ENCODE measurements at regions of chr1 and their contacts with region 1.

Region 1: DNA sequence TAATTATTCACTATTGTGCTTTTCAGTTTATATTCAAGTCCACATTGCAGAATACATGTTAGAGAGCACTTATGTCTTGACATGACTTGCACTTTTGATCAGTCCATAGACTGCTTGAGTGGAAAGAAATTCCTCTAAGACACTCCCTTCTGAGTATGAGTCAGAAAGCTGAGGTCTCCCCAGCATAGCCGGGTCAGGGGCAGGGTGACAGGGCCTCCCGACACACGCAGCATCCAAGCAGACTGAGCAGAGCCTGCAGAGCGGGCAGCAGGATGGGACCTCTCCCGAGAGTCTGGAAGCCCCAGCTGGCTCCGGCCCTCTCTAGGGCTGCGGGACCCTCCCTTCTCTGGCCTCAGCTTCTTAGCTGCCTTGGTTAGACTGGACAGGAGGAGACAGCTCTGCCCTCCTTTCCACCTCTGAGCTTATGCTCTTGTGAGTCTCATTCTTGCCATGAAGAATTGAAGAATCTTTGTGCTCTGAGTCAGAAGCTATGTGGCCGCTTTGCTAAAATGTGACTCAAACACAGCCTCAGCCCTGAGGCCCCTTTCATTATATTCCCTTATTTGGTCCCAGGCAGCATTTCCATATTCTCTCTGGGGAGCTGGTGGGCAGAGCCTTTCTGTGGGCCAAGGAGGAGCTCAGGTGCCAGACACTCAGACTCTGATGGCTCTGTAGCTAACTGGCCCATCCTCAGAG is 11.2 kb upstream of the CAPN2 start:
- DNase-seq: peak; percentile 98
- ATAC-seq: peak; percentile 81
- H3K4me3 ChIP-seq: peak overlapping the region; percentile 9; the same call in 1 of the 2 replicates
- H3K27ac ChIP-seq: peak overlapping the region; percentile 95
- H3K4me1 ChIP-seq: peaks cover 34% of the 10 kb centered on the region
- H3K27me3 ChIP-seq: no peaks in the 10 kb centered on the region
- CTCF ChIP-seq: no peak
- POLR2A ChIP-seq: peak; percentile 86; the same call in 1 of the 2 replicates
- RAD21 ChIP-seq: no peak

Region 2: GRCh38 chr1:223720928-223721591 is 20.0 kb after region 1 on chr1:
- CTCF ChIA-PET with region 1: interaction called, 5 read pairs
- POLR2A ChIA-PET with region 1: interaction called, 9 read pairs
- dilution Hi-C with region 1: no loop called
- in situ Hi-C with region 1: no loop called
- intact Hi-C with region 1: loop called (anchors 2 kb)
- DNase-seq: peak; percentile 95
- ATAC-seq: peak; percentile 56
- H3K4me3 ChIP-seq: no peak overlapping the region
- H3K27ac ChIP-seq: peak overlapping the region; percentile 69
- H3K4me1 ChIP-seq: peaks cover 49% of the 10 kb centered on the region
- H3K27me3 ChIP-seq: no peaks in the 10 kb centered on the region
- CTCF ChIP-seq: no peak
- POLR2A ChIP-seq: no peak
- RAD21 ChIP-seq: peak; percentile 18; the same call in 1 of the 2 replicates

Region 3: DNA sequence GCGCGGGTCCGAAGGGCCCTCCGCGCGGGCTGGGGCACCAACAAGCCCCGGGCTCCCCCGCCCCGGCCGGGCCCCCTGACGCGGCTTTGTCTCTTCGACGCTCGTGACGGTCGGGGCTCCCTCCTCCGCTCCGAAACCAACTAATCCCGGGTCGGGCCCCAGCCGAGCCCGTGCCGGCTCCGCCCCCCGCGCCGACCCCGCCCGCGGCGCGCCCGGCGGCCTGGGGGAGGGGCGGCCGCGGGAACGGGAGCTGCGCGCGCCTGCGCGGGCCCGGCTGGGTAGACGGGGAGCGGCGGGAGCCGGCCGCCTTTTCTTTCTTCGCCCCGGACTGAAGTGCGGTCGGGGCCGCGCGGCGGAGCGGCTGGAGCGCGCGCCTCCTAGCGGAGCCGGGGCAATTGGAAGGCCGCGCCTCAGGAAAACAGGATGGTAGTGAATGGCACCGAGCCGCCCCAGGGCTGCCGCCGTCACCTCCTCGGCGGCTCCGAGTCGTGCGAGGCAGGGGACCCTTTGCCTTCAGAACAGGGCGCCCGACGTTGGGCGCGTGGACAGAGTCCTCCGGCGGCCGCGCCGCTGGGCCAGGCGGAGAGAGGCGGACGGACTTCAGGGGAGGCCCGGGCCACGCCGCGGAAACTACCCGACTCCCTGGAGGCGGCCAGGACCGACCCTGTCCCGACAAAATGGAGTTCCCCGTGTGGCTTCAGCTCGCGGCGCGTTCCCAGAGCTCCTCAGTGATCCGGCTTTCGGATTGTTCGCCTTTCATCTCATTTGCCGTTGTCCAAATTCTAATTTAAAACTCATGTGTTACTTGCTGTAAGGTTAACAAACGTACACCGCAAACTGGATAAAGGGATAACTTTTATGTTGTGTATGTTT is 145.0 kb after region 1 on chr1 and contains the start of gene TP53BP2:
- CTCF ChIA-PET with region 1: no interaction called
- POLR2A ChIA-PET with region 1: no interaction called
- dilution Hi-C with region 1: no loop called
- in situ Hi-C with region 1: no loop called
- intact Hi-C with region 1: loop called (anchors 2 kb)
- DNase-seq: peak; percentile 87
- ATAC-seq: peak; percentile 95
- H3K4me3 ChIP-seq: peak within 1 kb of the TSS; percentile 93
- H3K27ac ChIP-seq: peak within 1 kb of the TSS; percentile 98
- H3K4me1 ChIP-seq: peaks cover 3% of the 10 kb centered on the region
- H3K27me3 ChIP-seq: no peaks in the 10 kb centered on the region
- CTCF ChIP-seq: peak; percentile 76
- POLR2A ChIP-seq: peak; percentile 86
- RAD21 ChIP-seq: peak; percentile 64
- total RNA-seq, gene TP53BP2: 35.0 and 35.8 TPM in 2 replicates

Region 4: GRCh38 chr1:224113918-224114786 is 413.1 kb after region 1 on chr1 and contains the start of gene FBXO28:
- CTCF ChIA-PET with region 1: no interaction called
- POLR2A ChIA-PET with region 1: no interaction called
- dilution Hi-C with region 1: no loop called
- in situ Hi-C with region 1: loop called (anchors 10 kb)
- intact Hi-C with region 1: loop called (anchors 5 kb)
- DNase-seq: peak; percentile 95
- ATAC-seq: peak; percentile 98
- H3K4me3 ChIP-seq: peak within 1 kb of the TSS; percentile 75
- H3K27ac ChIP-seq: peak within 1 kb of the TSS; percentile 72
- H3K4me1 ChIP-seq: no peaks in the 10 kb centered on the region
- H3K27me3 ChIP-seq: no peaks in the 10 kb centered on the region
- CTCF ChIP-seq: no peak
- POLR2A ChIP-seq: peak; percentile 90
- RAD21 ChIP-seq: no peak
- total RNA-seq, gene FBXO28: 22.6 and 30.0 TPM in 2 replicates

Region 5: GRCh38 chr1:224513787-224514209 is 812.7 kb after region 1 on chr1:
- CTCF ChIA-PET with region 1: no interaction called
- POLR2A ChIA-PET with region 1: no interaction called
- dilution Hi-C with region 1: no loop called
- in situ Hi-C with region 1: no loop called
- intact Hi-C with region 1: no loop called
- DNase-seq: peak; percentile 74
- ATAC-seq: peak; percentile 82
- H3K4me3 ChIP-seq: no peak overlapping the region
- H3K27ac ChIP-seq: no peak overlapping the region
- H3K4me1 ChIP-seq: peaks cover 15% of the 10 kb centered on the region
- H3K27me3 ChIP-seq: no peaks in the 10 kb centered on the region
- CTCF ChIP-seq: peak; percentile 98
- POLR2A ChIP-seq: peak; percentile 53; the same call in 1 of the 2 replicates
- RAD21 ChIP-seq: peak; percentile 99

Region 6: GRCh38 chr1:225441314-225442122 is 1740.4 kb after region 1 on chr1:
- CTCF ChIA-PET with region 1: no interaction called
- POLR2A ChIA-PET with region 1: interaction called, 15 read pairs
- dilution Hi-C with region 1: no loop called
- in situ Hi-C with region 1: no loop called
- intact Hi-C with region 1: no loop called
- DNase-seq: no peak
- ATAC-seq: no peak
- H3K4me3 ChIP-seq: no peak overlapping the region
- H3K27ac ChIP-seq: no peak overlapping the region
- H3K4me1 ChIP-seq: peaks cover 4% of the 10 kb centered on the region; the same call in 1 of the 2 replicates
- H3K27me3 ChIP-seq: 0 out of 2 replicates have a peak, but pooled peaks cover 1% of the 10 kb centered on the region
- CTCF ChIP-seq: peak; percentile 40
- POLR2A ChIP-seq: no peak
- RAD21 ChIP-seq: no peak